ENCODE measurements at regions of chr11 and their contacts with region 1.

Region 1: GRCh38 chr11:12102588-12103410 is 7.6 kb upstream of the MICAL2 start:
- DNase-seq: no peak
- H3K4me3 ChIP-seq: no peak overlapping the region
- H3K27ac ChIP-seq: no peak overlapping the region
- H3K4me1 ChIP-seq: peaks cover 8% of the 10 kb centered on the region; the same call in 1 of the 2 replicates
- H3K27me3 ChIP-seq: no peaks in the 10 kb centered on the region
- CTCF ChIP-seq: no peak

Region 2: DNA sequence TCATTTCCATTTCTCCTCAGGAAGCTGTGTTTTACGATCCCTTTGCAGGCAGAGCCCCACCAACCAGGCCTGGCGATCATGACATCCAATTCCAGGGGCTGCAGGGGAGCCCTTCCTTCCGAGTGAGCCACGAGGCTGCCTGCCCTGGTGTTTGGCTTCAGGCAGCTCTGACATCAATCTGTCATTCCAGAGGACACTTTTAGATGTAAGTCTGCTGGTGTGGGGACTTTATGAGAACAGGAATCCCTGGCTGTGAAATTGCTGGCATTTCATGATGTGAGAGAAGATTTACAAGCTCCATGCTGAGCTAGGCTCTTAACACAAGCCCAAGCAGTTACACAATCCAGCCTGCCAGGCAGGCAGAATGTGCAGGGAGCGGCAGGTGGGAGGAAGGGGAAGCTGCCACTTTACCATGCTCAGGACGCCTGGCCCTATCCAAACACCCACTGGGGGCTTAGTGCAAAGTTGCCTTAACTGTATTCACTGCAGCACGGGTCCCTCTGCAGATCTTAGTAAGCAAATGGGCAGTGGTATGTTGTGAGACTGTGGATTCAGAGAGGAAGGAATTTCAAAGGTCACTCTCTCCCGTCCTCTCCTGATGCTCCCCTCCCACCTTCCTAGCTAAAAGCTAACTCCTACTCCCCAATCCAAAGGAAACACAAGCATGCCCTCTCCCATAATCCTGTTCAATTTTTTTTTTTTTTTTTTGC is 35.8 kb before region 1 on chr11:
- CTCF ChIA-PET with region 1: no interaction called
- POLR2A ChIA-PET with region 1: interaction called, 33 read pairs
- intact Hi-C with region 1: no loop called
- DNase-seq: peak; percentile 41 to 85
- H3K4me3 ChIP-seq: peak overlapping the region; percentile 26; the same call in 1 of the 2 replicates
- H3K27ac ChIP-seq: peak overlapping the region; percentile 94
- H3K4me1 ChIP-seq: peaks cover 39% of the 10 kb centered on the region
- H3K27me3 ChIP-seq: no peaks in the 10 kb centered on the region
- CTCF ChIP-seq: no peak

Region 3: GRCh38 chr11:12258451-12258850 is 155.7 kb after region 1 on chr11:
- CTCF ChIA-PET with region 1: no interaction called
- POLR2A ChIA-PET with region 1: no interaction called
- intact Hi-C with region 1: no loop called
- DNase-seq: peak; percentile 40 to 82
- H3K4me3 ChIP-seq: no peak overlapping the region
- H3K27ac ChIP-seq: peak overlapping the region; percentile 60
- H3K4me1 ChIP-seq: peaks cover 25% of the 10 kb centered on the region
- H3K27me3 ChIP-seq: no peaks in the 10 kb centered on the region
- CTCF ChIP-seq: no peak

Measured in PC-9 (cell line).